ENCODE measurements at regions of chr3 and their contacts with region 1.

Region 1: DNA sequence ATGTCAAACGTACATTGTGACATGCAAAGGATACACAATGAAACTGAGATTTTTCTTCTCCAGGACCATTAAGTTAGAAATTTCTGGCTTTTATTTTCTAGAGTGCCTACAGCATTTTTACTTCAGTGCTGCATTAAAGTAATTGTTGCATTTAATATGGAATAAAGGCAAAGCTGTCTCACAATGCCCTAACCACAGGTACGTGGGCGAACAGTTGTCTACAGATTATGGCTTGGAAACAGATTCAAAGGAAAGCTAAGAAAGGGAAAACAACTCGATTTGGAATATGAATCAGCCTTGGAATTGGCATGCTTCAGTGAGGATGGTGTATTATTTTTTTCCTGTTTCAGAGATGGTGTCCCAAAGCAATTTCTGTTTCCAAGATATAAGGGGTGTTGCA is 79.1 kb upstream of the TUSC7 start:
- DNase-seq: no peak
- H3K4me3 ChIP-seq: no peak overlapping the region
- H3K27ac ChIP-seq: no peak overlapping the region
- H3K27me3 ChIP-seq: no peaks in the 10 kb centered on the region
- CTCF ChIP-seq: no peak

Region 2: DNA sequence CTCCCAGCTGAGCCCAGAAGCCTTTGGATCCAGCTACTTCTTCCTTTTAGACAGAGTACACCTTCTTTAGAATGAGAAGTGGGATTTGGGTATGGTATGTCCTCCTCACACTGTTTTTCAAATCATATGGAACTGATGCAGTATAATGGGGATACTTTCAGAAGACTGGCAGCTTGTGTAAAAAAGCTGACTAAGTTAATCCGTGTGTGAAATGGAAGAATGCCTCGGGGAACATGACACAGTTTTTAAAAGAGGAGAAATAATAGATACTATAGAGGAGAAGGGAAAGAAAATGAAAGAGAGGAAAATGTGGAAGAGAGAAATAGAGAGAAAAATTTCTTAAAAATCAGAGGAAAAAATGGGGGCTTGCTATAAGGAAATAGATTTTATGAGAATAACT is 126.8 kb after region 1 on chr3:
- intact Hi-C with region 1: loop called (anchors 2 to 10 kb)
- DNase-seq: no peak
- H3K4me3 ChIP-seq: no peak overlapping the region
- H3K27ac ChIP-seq: no peak overlapping the region
- H3K27me3 ChIP-seq: no peaks in the 10 kb centered on the region
- CTCF ChIP-seq: no peak

Region 3: DNA sequence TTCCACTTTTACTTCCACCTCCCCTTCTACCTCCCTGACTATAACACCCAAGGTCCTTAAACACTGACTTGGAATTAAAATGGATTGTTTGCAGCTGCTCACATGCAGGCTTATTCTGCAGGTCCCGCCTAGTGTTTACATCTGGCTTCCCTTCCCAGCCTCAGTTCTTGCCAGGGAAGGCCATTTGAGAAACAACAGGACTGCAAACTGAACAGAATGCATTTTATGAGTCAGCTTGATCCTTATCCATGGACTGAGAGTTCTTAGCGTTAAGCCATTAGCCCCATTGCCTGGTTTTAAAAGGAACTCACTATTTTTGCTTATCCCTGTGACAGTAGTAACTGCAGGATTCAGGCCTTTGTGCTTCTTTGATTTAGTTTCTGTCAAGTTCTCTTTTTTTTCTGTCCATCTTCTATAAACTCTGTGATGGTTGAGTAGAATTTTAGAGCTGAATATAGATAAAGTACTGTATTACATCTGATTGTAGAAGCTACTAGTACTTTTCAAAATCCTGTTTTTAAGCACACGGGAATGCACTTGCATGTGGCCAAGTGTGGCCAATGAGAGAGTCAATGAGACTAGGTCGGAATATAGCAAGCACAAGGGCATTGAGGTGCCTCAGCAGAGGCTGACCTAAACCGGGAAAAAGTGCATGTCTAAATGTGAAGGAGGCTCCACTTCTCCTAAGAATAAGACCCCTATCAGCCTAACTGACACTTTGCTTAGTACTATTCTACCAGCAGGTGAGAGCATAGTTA is 185.5 kb after region 1 on chr3:
- intact Hi-C with region 1: no loop called
- DNase-seq: no peak
- H3K4me3 ChIP-seq: no peak overlapping the region
- H3K27ac ChIP-seq: peak overlapping the region in 2 of 59 donors; percentile 21 to 37
- H3K27me3 ChIP-seq: no peaks in the 10 kb centered on the region
- CTCF ChIP-seq: no peak